ENCODE measurements at regions of chr7 and their contacts with region 1.

Region 1: GRCh38 chr7:50206453-50207250 is 97.9 kb upstream of the IKZF1 start:
- DNase-seq: no peak
- H3K4me3 ChIP-seq: no peak overlapping the region
- H3K27ac ChIP-seq: no peak overlapping the region
- H3K4me1 ChIP-seq: no peaks in the 10 kb centered on the region
- H3K27me3 ChIP-seq: peaks cover 69% of the 10 kb centered on the region
- CTCF ChIP-seq: no peak

Region 2: DNA sequence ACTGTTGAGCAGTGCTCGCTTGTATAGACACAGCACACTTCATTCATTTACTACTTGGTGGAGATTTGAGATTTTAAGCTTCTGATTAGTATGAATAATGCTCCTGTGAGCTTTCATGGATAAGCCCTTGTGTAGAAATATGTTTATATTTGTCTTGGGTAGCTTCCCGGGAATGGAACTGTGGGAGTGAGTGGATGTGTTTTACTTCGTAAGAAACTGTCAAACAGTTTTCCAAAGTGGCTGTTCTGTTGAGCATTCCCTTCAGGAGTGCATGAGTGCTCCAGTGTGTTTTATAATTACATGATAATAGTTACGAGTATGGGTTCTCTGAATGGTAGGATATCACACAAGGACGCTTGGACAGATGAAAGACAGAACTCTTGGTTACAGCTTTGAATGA is 383.8 kb before region 1 on chr7:
- CTCF ChIA-PET with region 1: interaction called, 13 read pairs
- POLR2A ChIA-PET with region 1: no interaction called
- intact Hi-C with region 1: no loop called
- DNase-seq: no peak
- H3K4me3 ChIP-seq: no peak overlapping the region
- H3K27ac ChIP-seq: no peak overlapping the region
- H3K4me1 ChIP-seq: no peaks in the 10 kb centered on the region
- H3K27me3 ChIP-seq: no peaks in the 10 kb centered on the region
- CTCF ChIP-seq: no peak

Region 3: GRCh38 chr7:50418086-50418515 is 211.4 kb after region 1 on chr7:
- CTCF ChIA-PET with region 1: interaction called, 4 read pairs
- POLR2A ChIA-PET with region 1: no interaction called
- intact Hi-C with region 1: loop called (anchors 1 kb)
- DNase-seq: peak; percentile 63 to 71
- H3K4me3 ChIP-seq: no peak overlapping the region
- H3K27ac ChIP-seq: no peak overlapping the region
- H3K4me1 ChIP-seq: no peaks in the 10 kb centered on the region
- H3K27me3 ChIP-seq: peaks cover 17% of the 10 kb centered on the region; the same call in 1 of the 2 replicates
- CTCF ChIP-seq: peak; percentile 94